ENCODE measurements at regions of chr2 and their contacts with region 1.

Region 1: DNA sequence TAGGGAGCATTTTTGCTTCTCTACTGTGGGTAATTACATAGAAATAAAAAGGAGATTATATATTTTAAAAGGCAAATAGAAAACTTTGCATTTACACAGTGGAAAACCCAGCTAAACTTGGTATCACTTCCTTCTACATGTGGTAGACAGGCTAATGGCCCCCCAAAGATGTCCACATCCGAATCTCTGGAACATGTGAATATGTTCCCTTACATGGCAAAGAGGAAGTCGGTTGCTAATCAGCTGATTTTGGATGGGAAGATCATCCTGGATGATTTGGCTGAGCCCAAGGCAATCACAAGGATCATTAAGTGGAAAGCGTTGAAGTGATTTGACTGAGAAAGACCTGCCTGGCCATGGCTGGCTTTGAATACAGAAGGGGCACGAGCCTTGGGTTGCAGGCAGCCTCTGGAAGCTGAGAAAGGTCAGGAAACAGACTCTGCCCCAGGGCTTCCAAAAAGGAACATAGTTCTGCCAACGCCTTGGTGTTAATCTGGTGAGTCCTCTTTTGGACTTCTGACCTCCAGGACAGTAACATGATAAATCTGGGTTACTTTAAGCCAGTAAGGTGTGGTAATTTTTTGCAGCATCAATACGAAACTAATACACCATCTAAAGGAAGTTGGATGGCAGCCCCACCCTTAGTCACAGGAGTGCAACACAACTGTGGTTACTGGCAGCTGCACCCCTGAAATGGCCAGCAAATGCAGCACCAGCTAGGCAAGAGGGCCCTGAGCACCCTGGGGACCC is 26.0 kb downstream of the CREG2 start:
- DNase-seq: peak in 22 of 35 experiments; percentile 5 to 47 (median 18)
- ATAC-seq: peak; percentile 77 to 92 (median 87)
- H3K4me3 ChIP-seq: no peak overlapping the region
- H3K4me3 Mint-ChIP-seq: peak overlapping the region; percentile 3 to 64 (median 47)
- H3K27ac ChIP-seq: peak overlapping the region; percentile 50
- H3K27ac Mint-ChIP-seq: peak overlapping the region; percentile 84
- H3K4me1 ChIP-seq: peaks cover 10 to 27% of the 10 kb centered on the region in 2 experiments
- H3K4me1 Mint-ChIP-seq: peaks cover 29 to 33% (median 32%) of the 10 kb centered on the region in 3 donors
- H3K27me3 ChIP-seq: no peaks in the 10 kb centered on the region
- H3K27me3 Mint-ChIP-seq: no peaks in the 10 kb centered on the region

Region 2: GRCh38 chr2:101341901-101342624 is 19.2 kb before region 1 on chr2:
- CTCF ChIA-PET with region 1: interaction called in 1 of 2 experiments, 13 read pairs
- POLR2A ChIA-PET with region 1: interaction called in 1 of 2 experiments, 3 read pairs
- DNase-seq: peak in 34 of 35 experiments; percentile 16 to 84 (median 60)
- ATAC-seq: peak in 3 of 4 experiments; percentile 59 to 70 (median 64)
- H3K4me3 ChIP-seq: no peak overlapping the region
- H3K4me3 Mint-ChIP-seq: peak overlapping the region in 1 of 3 donors; percentile 11
- H3K27ac ChIP-seq: no peak overlapping the region
- H3K27ac Mint-ChIP-seq: peak overlapping the region in 1 of 2 donors; percentile 16
- H3K4me1 ChIP-seq: peaks cover 8 to 16% of the 10 kb centered on the region in 2 experiments
- H3K4me1 Mint-ChIP-seq: peaks cover 24 to 40% (median 32%) of the 10 kb centered on the region in 3 donors
- H3K27me3 ChIP-seq: no peaks in the 10 kb centered on the region
- H3K27me3 Mint-ChIP-seq: no peaks in the 10 kb centered on the region

Region 3: DNA sequence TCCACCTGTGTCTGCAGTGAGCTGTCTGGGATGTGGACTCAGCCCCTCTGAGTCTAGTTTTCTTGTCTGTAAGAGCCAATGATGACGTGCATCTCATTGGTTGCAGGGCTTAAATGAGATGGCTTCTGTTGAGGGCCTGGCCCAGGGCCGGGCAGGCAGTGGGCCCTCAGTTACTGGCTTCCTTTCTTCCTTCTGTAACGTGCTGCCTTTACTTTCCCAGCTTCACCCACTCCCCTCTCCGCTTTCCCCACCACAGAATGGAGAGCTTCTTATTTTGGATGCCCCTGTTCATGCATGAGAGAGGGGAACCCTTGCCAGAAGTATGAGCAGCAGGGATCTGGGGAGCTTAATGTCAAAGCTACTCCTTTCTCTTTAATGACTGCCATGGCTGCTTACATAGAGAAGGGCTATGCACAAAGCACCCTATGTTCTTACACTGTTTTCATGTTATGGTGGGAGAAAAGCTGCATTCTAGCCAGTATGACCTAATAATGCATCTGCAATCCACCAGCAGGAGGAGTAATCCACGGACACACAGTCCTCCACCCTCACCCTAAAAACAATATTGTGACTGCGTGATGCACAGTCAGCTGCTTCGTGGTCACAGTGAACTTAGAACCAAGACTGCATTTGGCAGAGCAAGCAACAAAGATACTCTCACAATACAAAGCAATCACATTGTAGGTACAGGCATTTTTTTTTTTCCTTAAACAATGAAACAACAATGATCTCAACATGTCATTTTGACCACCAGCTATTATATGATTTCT is 11.2 kb before region 1 on chr2:
- CTCF ChIA-PET with region 1: interaction called, 5 to 13 read pairs
- POLR2A ChIA-PET with region 1: no interaction called
- DNase-seq: peak in 1 of 35 experiments; percentile 38
- ATAC-seq: peak; percentile 40 to 58 (median 44)
- H3K4me3 ChIP-seq: no peak overlapping the region
- H3K4me3 Mint-ChIP-seq: no peak overlapping the region
- H3K27ac ChIP-seq: no peak overlapping the region
- H3K27ac Mint-ChIP-seq: no peak overlapping the region
- H3K4me1 ChIP-seq: no peaks in the 10 kb centered on the region
- H3K4me1 Mint-ChIP-seq: peaks cover 7 to 14% (median 11%) of the 10 kb centered on the region in 3 donors
- H3K27me3 ChIP-seq: no peaks in the 10 kb centered on the region
- H3K27me3 Mint-ChIP-seq: no peaks in the 10 kb centered on the region

Measured in T-cell (primary cell).